PC-9 (cell line): ENCODE measurements at regions of chr6 and their contacts with region 1.

Region 1: GRCh38 chr6:139375232-139376016 is 976 bp upstream of the CITED2 start:
- DNase-seq: peak; percentile 85 to 100
- H3K4me3 ChIP-seq: peak overlapping the region; percentile 89
- H3K27ac ChIP-seq: peak overlapping the region; percentile 94
- H3K4me1 ChIP-seq: peaks cover 58% of the 10 kb centered on the region
- H3K27me3 ChIP-seq: no peaks in the 10 kb centered on the region
- CTCF ChIP-seq: no peak; the same call in 1 of the 2 replicates

Region 2: DNA sequence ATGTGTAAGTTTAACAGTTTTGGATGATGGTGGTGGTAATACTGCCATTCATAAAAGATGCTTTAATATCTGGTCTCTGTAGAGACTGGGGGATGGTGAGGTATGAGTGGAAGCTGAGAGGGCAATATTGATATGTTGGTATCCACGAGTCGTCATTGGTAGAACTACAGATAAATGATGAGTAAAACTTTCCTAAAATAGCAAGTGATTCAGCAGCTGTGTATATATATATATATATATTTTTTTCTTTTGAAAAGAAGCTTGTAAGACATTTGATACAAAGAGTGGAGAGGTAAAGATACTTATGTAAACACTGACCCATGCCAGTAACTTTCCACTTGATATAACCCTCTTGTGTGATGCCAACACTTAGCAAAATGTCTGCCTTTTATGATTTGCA is 40.7 kb after region 1 on chr6:
- CTCF ChIA-PET with region 1: no interaction called
- POLR2A ChIA-PET with region 1: no interaction called
- intact Hi-C with region 1: no loop called
- DNase-seq: no peak
- H3K4me3 ChIP-seq: no peak overlapping the region
- H3K27ac ChIP-seq: no peak overlapping the region
- H3K4me1 ChIP-seq: no peaks in the 10 kb centered on the region; the same call in 1 of the 2 replicates
- H3K27me3 ChIP-seq: no peaks in the 10 kb centered on the region
- CTCF ChIP-seq: no peak

Region 3: DNA sequence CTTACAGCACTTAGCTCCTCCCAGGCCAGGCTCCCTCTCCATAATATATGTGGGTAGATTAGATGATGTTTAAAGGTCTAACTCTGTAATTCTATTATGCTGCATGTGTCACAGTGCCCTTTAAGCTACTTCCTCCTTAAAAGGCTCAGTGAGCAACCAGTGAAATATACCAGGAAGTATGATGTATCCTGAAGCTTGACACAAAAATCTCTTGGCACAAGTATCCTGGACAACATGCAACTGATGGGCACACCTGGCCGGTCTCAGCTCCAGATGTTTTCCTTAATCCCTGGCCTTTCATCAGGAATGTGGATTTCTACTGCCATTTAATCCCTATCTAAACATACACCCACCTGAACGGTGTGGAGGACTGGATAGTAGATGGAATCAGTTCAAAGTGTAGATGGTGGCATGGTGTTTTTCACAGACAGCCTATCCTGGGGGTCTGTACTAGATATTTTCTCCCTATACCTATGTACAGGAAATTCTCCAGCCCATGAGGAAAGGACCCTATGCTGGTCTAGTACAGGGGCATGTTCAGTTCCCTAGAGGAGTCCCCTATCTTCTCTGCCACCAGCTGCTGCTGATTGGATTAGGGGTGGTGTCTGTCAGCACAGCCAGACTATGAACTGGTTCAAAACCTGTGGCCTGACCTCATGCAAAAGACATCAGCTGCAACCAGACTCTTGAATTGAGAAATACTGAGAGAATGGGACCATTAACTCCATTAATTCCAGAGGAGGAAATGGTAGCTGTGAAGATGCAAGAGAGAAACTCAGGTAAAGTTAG is 58.4 kb after region 1 on chr6:
- CTCF ChIA-PET with region 1: no interaction called
- POLR2A ChIA-PET with region 1: interaction called, 8 read pairs
- intact Hi-C with region 1: loop called (anchors 1 kb)
- DNase-seq: peak in 1 of 2 experiments; percentile 89
- H3K4me3 ChIP-seq: no peak overlapping the region
- H3K27ac ChIP-seq: peak overlapping the region; percentile 33
- H3K4me1 ChIP-seq: peaks cover 53% of the 10 kb centered on the region
- H3K27me3 ChIP-seq: no peaks in the 10 kb centered on the region
- CTCF ChIP-seq: no peak

Region 4: GRCh38 chr6:139547111-139547776 is 171.8 kb after region 1 on chr6:
- CTCF ChIA-PET with region 1: no interaction called
- POLR2A ChIA-PET with region 1: interaction called, 22 read pairs
- intact Hi-C with region 1: no loop called
- DNase-seq: no peak
- H3K4me3 ChIP-seq: no peak overlapping the region
- H3K27ac ChIP-seq: no peak overlapping the region
- H3K4me1 ChIP-seq: no peaks in the 10 kb centered on the region
- H3K27me3 ChIP-seq: no peaks in the 10 kb centered on the region
- CTCF ChIP-seq: no peak

Region 5: GRCh38 chr6:139655790-139656687 is 280.6 kb after region 1 on chr6:
- CTCF ChIA-PET with region 1: no interaction called
- POLR2A ChIA-PET with region 1: no interaction called
- intact Hi-C with region 1: loop called (anchors 5 kb)
- DNase-seq: peak; percentile 43 to 84
- H3K4me3 ChIP-seq: no peak overlapping the region
- H3K27ac ChIP-seq: no peak overlapping the region
- H3K4me1 ChIP-seq: peaks cover 30% of the 10 kb centered on the region
- H3K27me3 ChIP-seq: no peaks in the 10 kb centered on the region
- CTCF ChIP-seq: no peak

Region 6: GRCh38 chr6:139881728-139882211 is 506.3 kb after region 1 on chr6:
- CTCF ChIA-PET with region 1: no interaction called
- POLR2A ChIA-PET with region 1: no interaction called
- intact Hi-C with region 1: loop called (anchors 5 kb)
- DNase-seq: no peak
- H3K4me3 ChIP-seq: no peak overlapping the region
- H3K27ac ChIP-seq: no peak overlapping the region
- H3K4me1 ChIP-seq: peaks cover 22% of the 10 kb centered on the region
- H3K27me3 ChIP-seq: no peaks in the 10 kb centered on the region
- CTCF ChIP-seq: peak; percentile 81